Esophagus squamous epithelium (tissue), 5 donors: ENCODE measurements at regions of chr3 and their contacts with region 1.

Region 1: DNA sequence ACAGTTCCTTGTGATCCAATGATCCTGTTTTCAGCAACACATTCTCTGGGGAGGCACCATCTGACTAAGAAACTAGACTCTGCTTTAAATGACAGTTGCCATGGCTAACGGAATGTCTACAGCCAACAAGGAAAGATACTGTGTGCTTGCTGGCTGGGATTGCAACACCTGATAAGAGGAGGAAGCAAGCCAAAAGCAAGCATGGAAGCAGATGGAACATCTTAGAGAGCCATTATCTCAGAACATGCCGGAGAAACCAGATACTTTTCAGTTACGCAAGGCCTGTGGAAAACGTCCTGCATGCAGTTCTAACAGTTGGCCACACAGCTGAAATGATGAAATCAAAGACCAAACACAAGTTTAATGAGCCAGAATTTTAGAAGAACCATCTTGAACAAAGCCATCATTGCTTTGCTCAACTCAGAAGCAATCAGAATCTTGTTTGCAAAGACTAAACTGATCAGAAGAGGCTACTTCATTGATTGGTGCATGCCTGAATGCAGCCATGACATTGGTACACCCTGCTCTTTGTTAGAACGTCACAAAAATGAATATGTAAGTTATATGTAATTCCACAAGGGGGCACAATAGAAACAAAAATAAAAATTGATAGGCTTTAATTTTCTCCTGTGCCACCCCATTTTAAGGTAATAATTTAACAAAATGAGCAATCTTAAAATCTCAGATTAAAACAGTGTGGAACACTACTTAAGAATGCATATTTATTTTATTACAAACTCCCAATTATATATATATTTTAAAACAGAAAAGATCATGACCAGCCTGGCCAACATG is 50.8 kb downstream of the GXYLT2 start:
- DNase-seq: no peak
- H3K4me3 ChIP-seq: no peak overlapping the region
- H3K27ac ChIP-seq: peak overlapping the region in 2 of 4 donors; percentile 23 to 48
- H3K4me1 ChIP-seq: peaks cover 0 to 5% (median 0%) of the 10 kb centered on the region in 3 donors
- H3K27me3 ChIP-seq: no peaks in the 10 kb centered on the region
- CTCF ChIP-seq: peak in 5 of 6 experiments; percentile 56 to 74 (median 67)
- POLR2A ChIP-seq: no peak

Region 2: GRCh38 chr3:72847751-72848702 is 90.6 kb before region 1 on chr3 and contains the start of gene SHQ1:
- intact Hi-C with region 1: no loop called
- DNase-seq: peak; percentile 77
- H3K4me3 ChIP-seq: peak within 1 kb of the TSS; percentile 64 to 81 (median 77)
- H3K27ac ChIP-seq: peak within 1 kb of the TSS; percentile 73 to 87 (median 81)
- H3K4me1 ChIP-seq: peaks cover 12 to 35% (median 16%) of the 10 kb centered on the region in 3 donors
- H3K27me3 ChIP-seq: no peaks in the 10 kb centered on the region
- CTCF ChIP-seq: no peak
- POLR2A ChIP-seq: peak in 1 of 4 donors; percentile 52
- total RNA-seq, gene SHQ1: 6.7 to 13.4 (median 12.5) TPM

Region 3: DNA sequence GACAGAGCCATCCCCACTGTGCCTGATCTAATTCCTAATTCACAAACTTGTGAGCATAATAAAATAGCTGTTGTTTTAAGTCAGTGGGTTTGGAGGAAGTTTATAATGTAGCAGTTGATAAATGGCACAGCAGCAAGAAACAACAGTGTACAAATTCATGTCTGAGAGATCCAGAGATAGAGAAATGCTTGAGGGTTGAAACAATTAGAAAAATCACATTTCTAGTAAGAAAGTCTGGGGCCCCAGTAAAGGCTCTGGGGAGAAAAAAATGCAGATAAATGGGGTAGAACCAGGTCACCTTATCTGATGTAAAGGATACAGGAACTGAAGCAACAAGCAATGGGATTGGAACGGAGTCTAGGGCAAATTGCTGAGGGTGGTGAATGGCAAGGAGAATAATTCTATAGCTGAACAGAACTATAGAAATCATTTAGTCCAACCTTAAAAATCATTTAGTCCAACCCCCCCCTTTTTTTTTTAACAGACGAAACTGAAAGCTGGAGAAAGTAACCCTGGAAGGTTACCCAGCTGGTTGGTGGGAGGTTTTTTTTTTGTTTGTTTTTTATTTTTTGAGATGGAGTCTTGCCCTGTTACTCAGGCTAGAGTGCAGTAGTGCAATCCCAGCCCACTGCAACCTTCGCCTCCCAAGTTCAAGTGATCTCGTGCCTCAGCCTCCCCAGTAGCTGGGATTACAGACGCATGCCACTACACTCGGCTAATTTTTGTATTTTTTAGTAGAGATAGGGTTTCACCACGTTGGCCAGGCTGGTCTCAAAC is 76.2 kb before region 1 on chr3:
- intact Hi-C with region 1: loop called (anchors 10 kb)
- DNase-seq: no peak
- H3K4me3 ChIP-seq: no peak overlapping the region
- H3K27ac ChIP-seq: no peak overlapping the region
- H3K4me1 ChIP-seq: no peaks in the 10 kb centered on the region
- H3K27me3 ChIP-seq: no peaks in the 10 kb centered on the region
- CTCF ChIP-seq: no peak
- POLR2A ChIP-seq: no peak

Region 4: GRCh38 chr3:73080216-73080966 is 141.7 kb after region 1 on chr3:
- intact Hi-C with region 1: loop called (anchors 5 kb)
- DNase-seq: no peak
- H3K4me3 ChIP-seq: no peak overlapping the region
- H3K27ac ChIP-seq: no peak overlapping the region
- H3K4me1 ChIP-seq: no peaks in the 10 kb centered on the region
- H3K27me3 ChIP-seq: no peaks in the 10 kb centered on the region
- CTCF ChIP-seq: no peak
- POLR2A ChIP-seq: no peak

Region 5: DNA sequence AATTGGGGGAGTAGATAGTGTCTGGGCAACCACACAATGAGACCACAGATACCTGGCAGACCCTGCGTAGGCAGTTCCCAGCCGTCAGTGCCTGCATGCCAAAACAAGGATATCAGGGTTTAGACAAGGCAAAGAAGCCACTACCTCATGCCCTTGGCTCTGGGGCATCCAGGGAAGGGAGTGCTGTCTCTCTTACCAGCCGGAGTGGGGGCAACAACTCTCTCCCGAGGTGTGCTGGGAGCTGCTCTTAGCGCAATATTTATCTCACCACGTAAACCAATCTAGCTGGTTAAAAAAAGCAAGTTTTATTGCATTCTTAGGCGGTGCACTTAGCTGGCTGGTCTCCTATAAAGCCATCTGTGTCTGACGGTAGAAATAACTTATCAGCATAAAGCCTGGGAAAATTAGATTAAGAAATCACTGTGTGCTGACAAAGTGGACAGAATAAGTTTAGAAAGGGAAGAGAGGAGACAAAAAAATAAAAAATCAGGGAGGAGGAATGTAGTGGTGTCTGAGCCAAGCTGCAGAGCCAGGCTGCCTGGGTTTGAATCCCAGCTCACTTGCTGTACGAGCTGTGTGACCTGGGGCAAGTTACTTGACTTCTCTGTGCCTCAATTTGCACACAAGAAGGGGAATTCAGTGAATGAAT is 412.9 kb after region 1 on chr3:
- intact Hi-C with region 1: no loop called
- DNase-seq: no peak
- H3K4me3 ChIP-seq: no peak overlapping the region
- H3K27ac ChIP-seq: no peak overlapping the region
- H3K4me1 ChIP-seq: no peaks in the 10 kb centered on the region
- H3K27me3 ChIP-seq: no peaks in the 10 kb centered on the region
- CTCF ChIP-seq: no peak
- POLR2A ChIP-seq: no peak

Region 6: GRCh38 chr3:73490453-73491286 is 552.0 kb after region 1 on chr3:
- intact Hi-C with region 1: loop called (anchors 10 kb)
- DNase-seq: no peak
- H3K4me3 ChIP-seq: no peak overlapping the region
- H3K27ac ChIP-seq: no peak overlapping the region
- H3K4me1 ChIP-seq: peaks cover 0 to 27% (median 9%) of the 10 kb centered on the region in 3 donors
- H3K27me3 ChIP-seq: no peaks in the 10 kb centered on the region
- CTCF ChIP-seq: no peak
- POLR2A ChIP-seq: no peak